ENCODE measurements at regions of chr9 and their contacts with region 1.

Region 1: DNA sequence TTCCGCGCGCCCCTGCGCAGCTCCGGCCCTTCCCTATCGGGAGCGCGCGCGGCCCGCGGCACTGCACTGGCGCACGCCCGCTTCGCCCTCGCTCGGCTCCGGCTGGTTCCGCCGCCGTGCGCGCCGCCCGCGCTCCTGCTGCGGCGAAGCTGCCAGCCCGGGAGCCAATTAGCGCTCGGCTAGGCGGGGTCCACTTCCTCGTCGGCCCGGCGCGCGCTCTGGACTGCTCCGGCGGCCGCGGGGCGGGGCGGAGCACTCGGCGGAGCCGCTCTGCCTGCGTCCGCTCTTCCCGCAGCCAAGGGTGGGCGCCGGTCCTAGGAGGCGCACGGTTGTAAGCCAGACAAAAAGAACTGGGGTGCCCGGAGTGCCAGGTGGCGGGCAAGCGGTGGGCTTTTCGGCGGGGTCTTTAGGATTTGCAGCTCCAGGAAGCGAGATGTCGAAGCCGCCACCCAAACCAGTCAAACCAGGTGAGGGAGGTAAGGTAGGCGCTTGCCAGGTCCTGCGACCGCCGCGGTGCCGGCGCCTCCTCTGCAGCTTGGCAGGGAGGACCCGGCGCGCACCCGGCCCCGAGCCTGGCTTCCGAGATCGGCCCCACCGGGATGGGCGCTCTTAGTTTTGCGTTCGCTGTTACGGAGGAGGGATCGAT is at the start of gene OSTF1:
- DNase-seq: peak; percentile 95
- H3K4me3 Mint-ChIP-seq: peak within 1 kb of the TSS; percentile 96
- H3K27ac Mint-ChIP-seq: peak within 1 kb of the TSS; percentile 98
- H3K4me1 Mint-ChIP-seq: peaks cover 54% of the 10 kb centered on the region
- H3K27me3 Mint-ChIP-seq: no peaks in the 10 kb centered on the region
- total RNA-seq, gene OSTF1: 151 TPM

Region 2: DNA sequence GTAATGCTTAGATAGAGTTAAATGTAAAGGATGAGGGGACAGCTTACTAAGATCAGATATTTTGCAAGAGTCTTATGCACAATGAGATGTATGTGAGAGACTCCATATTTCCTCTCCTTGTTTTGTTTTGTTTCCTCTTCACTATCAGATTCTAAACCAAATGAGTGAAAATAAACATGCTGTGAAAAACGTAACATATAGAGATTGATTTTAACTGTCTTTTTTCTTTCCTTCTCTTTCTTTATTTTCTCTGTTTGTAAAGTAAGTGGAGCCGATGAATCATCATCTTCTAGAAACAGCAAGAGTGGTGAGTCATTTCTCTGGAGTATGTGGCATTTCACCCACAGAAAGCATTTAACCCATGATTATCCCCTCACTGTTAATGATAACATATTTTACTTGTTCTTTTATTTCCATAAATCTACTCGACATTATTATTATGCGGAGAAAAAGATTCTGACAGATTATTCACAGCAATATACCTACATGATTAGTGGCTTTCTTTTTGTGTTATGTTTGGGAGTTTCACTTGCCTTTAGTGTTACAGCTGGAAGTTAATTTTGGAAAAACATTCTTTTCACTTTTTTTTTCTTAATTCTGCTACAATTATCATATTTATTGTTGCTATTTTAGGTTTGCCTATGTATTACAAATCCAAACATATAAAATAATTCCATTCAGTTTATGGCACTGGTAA is 1938.9 kb before region 1 on chr9:
- CTCF ChIA-PET with region 1: no interaction called
- POLR2A ChIA-PET with region 1: no interaction called
- intact Hi-C with region 1: loop called (anchors 5 kb)
- DNase-seq: no peak
- H3K4me3 Mint-ChIP-seq: peak overlapping the region; percentile 55
- H3K27ac Mint-ChIP-seq: peak overlapping the region; percentile 86
- H3K4me1 Mint-ChIP-seq: peaks cover 66% of the 10 kb centered on the region
- H3K27me3 Mint-ChIP-seq: no peaks in the 10 kb centered on the region

Region 3: GRCh38 chr9:75027187-75028107 is 60.9 kb before region 1 on chr9:
- CTCF ChIA-PET with region 1: interaction called, 9 read pairs
- POLR2A ChIA-PET with region 1: interaction called, 31 read pairs
- intact Hi-C with region 1: loop called (anchors 1 kb)
- DNase-seq: peak; percentile 68
- H3K4me3 Mint-ChIP-seq: peak overlapping the region; percentile 99
- H3K27ac Mint-ChIP-seq: peak overlapping the region; percentile 97
- H3K4me1 Mint-ChIP-seq: peaks cover 35% of the 10 kb centered on the region
- H3K27me3 Mint-ChIP-seq: no peaks in the 10 kb centered on the region

Region 4: DNA sequence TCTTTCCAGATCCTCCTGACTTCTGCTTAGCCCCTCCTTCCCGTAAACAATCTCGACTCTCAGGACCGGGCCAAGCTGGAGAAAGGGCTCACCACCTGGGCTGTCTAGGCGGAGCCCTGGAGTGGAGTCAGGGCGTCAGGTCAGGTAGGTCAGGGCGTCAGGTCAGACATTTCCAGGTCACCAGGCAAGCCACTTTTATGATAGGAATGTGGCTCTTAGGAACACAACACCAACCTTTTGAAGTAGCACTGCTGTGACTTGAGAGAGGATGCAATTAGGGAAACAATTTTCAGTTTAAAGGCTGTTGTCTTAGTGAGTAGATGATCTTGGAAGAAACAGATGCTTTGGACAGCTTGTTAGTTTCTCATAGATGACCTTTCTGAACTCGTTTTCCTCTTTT is 12.7 kb after region 1 on chr9:
- CTCF ChIA-PET with region 1: interaction called, 3 read pairs
- POLR2A ChIA-PET with region 1: interaction called, 19 read pairs
- intact Hi-C with region 1: no loop called
- DNase-seq: no peak
- H3K4me3 Mint-ChIP-seq: no peak overlapping the region
- H3K27ac Mint-ChIP-seq: no peak overlapping the region
- H3K4me1 Mint-ChIP-seq: peaks cover 66% of the 10 kb centered on the region
- H3K27me3 Mint-ChIP-seq: no peaks in the 10 kb centered on the region

Region 5: GRCh38 chr9:75130621-75131230 is 42.3 kb after region 1 on chr9:
- CTCF ChIA-PET with region 1: interaction called, 6 read pairs
- POLR2A ChIA-PET with region 1: no interaction called
- intact Hi-C with region 1: loop called (anchors 2 kb)
- DNase-seq: no peak
- H3K4me3 Mint-ChIP-seq: no peak overlapping the region
- H3K27ac Mint-ChIP-seq: no peak overlapping the region
- H3K4me1 Mint-ChIP-seq: peaks cover 38% of the 10 kb centered on the region
- H3K27me3 Mint-ChIP-seq: no peaks in the 10 kb centered on the region

Region 6: DNA sequence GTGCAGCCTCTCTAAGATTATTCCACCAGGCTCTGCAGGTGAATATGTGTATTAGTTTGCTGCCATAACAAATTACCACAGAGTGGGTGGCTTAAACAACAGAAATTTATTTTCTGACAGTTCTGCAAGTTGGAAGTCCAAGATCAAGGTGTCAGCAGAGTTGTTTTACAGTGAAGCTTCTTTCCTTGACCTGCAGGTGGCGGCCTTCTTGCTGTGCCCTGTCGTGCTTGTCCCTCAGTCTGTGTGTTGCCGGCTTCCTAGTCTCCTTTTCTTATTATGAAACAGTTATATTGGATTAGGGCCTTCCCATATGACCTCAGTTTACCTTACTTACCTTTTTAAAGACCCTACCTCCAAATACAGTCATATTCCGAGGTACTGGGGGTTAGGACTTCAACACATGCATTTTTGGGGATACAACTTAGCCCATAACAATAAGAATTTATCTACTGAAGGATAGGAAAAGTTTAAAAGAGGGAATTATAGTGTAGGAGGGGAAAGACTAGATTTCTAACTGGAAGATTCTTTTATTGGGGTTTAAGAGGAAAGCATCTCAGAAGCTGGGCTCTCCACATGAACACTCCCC is 97.3 kb after region 1 on chr9:
- CTCF ChIA-PET with region 1: interaction called, 15 read pairs
- POLR2A ChIA-PET with region 1: interaction called, 4 read pairs
- intact Hi-C with region 1: loop called (anchors 2 kb)
- DNase-seq: peak; percentile 69
- H3K4me3 Mint-ChIP-seq: no peak overlapping the region
- H3K27ac Mint-ChIP-seq: no peak overlapping the region
- H3K4me1 Mint-ChIP-seq: peaks cover 19% of the 10 kb centered on the region
- H3K27me3 Mint-ChIP-seq: no peaks in the 10 kb centered on the region

Region 7: GRCh38 chr9:76458903-76459690 is 1370.7 kb after region 1 on chr9 and contains the start of gene GCNT1:
- CTCF ChIA-PET with region 1: no interaction called
- POLR2A ChIA-PET with region 1: no interaction called
- intact Hi-C with region 1: loop called (anchors 2 kb)
- DNase-seq: peak; percentile 94
- H3K4me3 Mint-ChIP-seq: peak within 1 kb of the TSS; percentile 94
- H3K27ac Mint-ChIP-seq: peak within 1 kb of the TSS; percentile 49
- H3K4me1 Mint-ChIP-seq: peaks cover 18% of the 10 kb centered on the region
- H3K27me3 Mint-ChIP-seq: no peaks in the 10 kb centered on the region
- total RNA-seq, gene GCNT1: 6.7 to 6.9 TPM